PC-9 (cell line): ENCODE measurements at regions of chr10 and their contacts with region 1.

Region 1: GRCh38 chr10:103295374-103296015 is 18.6 kb downstream of the INA start:
- DNase-seq: peak in 1 of 2 experiments; percentile 35
- H3K4me3 ChIP-seq: no peak overlapping the region
- H3K27ac ChIP-seq: no peak overlapping the region
- H3K4me1 ChIP-seq: peaks cover 7% of the 10 kb centered on the region; the same call in 1 of the 2 replicates
- H3K27me3 ChIP-seq: no peaks in the 10 kb centered on the region
- CTCF ChIP-seq: no peak

Region 2: GRCh38 chr10:103120977-103121735 is 174.3 kb before region 1 on chr10:
- CTCF ChIA-PET with region 1: no interaction called
- POLR2A ChIA-PET with region 1: interaction called, 10 read pairs
- intact Hi-C with region 1: no loop called
- DNase-seq: no peak
- H3K4me3 ChIP-seq: no peak overlapping the region
- H3K27ac ChIP-seq: peak overlapping the region; percentile 20; the same call in 1 of the 2 replicates
- H3K4me1 ChIP-seq: no peaks in the 10 kb centered on the region
- H3K27me3 ChIP-seq: no peaks in the 10 kb centered on the region
- CTCF ChIP-seq: no peak